Sigmoid colon (tissue), 7 donors: ENCODE measurements at regions of chr17 and their contacts with region 1.

Region 1: DNA sequence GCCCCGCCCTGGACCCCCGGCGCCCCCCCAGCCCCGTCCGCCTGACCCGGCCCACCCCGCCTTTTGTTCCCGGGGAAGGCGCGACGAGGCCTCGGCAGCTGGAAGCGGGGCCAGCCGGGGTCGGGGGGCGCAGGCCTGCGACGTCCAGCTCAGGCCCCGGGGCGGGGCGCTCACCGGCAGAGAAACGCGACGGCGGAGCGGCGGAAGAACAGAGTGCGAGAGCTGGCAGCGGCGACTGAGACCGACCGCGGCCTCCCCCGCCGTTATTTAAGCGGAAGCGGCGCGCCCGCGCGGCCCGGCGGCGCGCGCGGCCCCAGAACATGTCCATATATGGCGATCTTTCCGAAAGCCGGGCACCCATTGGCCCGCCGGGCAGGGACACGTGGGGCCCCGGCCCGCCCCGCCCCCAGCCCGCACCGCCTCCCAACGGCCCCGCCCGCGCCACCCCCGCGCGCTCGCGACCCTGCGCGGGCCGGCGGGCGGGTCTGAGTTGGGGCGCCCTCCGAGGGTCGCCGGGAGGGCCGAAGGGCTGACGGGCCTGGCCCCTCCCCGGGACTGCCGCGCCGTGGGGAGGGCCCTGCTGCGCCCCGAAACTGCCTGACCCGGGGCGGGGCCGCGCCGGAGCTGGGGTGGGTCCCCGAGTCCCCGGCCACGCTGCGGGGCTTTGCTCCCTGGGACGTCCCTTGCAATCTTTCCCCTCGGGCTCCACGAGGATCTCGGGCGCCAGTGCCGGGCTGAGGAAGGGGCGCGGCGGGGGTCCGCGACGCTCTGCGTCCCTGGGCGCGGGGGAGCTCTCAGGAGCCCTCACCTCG is at the start of gene ACTG1:
- DNase-seq: peak; percentile 97
- H3K4me3 ChIP-seq: peak within 1 kb of the TSS; percentile 88 to 99 (median 96)
- H3K27ac ChIP-seq: peak within 1 kb of the TSS; percentile 99 to 100 (median 100)
- H3K4me1 ChIP-seq: peaks cover 0 to 60% (median 36%) of the 10 kb centered on the region in 4 donors
- H3K27me3 ChIP-seq: no peaks in the 10 kb centered on the region
- CTCF ChIP-seq: no peak
- EP300 ChIP-seq: peak in 1 of 4 donors; percentile 25
- POLR2A ChIP-seq: peak; percentile 93
- total RNA-seq, gene ACTG1: 1,038 to 2,003 (median 1,212) TPM

Region 2: GRCh38 chr17:81346090-81346907 is 166.5 kb before region 1 on chr17:
- intact Hi-C with region 1: loop called (anchors 1 kb)
- DNase-seq: peak; percentile 100
- H3K4me3 ChIP-seq: peak overlapping the region; percentile 43 to 93 (median 72)
- H3K27ac ChIP-seq: peak overlapping the region; percentile 95 to 100 (median 98)
- H3K4me1 ChIP-seq: peaks cover 0 to 35% (median 17%) of the 10 kb centered on the region in 4 donors
- H3K27me3 ChIP-seq: no peaks in the 10 kb centered on the region
- CTCF ChIP-seq: no peak
- EP300 ChIP-seq: no peak
- POLR2A ChIP-seq: peak; percentile 93 to 97

Region 3: GRCh38 chr17:81394921-81395599 is 117.7 kb before region 1 on chr17 and contains the start of gene BAHCC1:
- intact Hi-C with region 1: loop called (anchors 2 kb)
- DNase-seq: peak; percentile 100
- H3K4me3 ChIP-seq: peak within 1 kb of the TSS; percentile 69 to 84 (median 74)
- H3K27ac ChIP-seq: peak within 1 kb of the TSS; percentile 93 to 99 (median 98)
- H3K4me1 ChIP-seq: peaks cover 0 to 57% (median 38%) of the 10 kb centered on the region in 4 donors
- H3K27me3 ChIP-seq: no peaks in the 10 kb centered on the region
- CTCF ChIP-seq: no peak
- EP300 ChIP-seq: peak in 2 of 4 donors; percentile 23 to 66
- POLR2A ChIP-seq: peak; percentile 96 to 97
- total RNA-seq, gene BAHCC1: 3.8 to 18.6 (median 7.2) TPM

Region 4: DNA sequence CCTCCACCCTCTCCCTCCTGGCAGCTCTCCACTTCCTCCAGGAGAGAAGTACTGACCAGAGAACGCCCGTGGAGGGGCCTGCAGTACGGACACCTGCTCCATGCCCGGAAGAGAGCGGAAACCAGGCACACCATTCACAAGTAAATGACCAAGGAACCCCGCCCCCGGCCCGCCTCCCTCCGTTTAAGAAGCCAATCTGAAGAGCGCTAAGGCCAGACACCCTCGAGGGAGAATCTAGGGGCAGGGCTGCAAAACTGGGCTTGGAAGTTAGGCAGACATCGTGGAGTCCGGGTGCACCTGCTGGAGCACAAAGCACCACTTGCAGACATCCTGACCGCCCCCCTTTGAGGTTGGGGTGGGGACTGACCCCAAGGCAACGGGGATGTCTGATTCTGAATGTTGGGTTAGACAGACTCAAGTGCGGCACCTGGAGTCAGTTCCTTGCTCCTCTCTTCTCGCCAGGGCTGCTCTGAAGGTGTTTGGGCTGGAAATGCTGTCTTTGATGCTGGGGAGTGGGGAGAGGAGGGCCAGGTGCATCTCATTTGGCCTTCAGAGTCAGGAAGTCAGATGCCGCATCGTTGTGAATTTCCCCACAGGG is 40.4 kb after region 1 on chr17:
- intact Hi-C with region 1: loop called (anchors 2 kb)
- DNase-seq: peak; percentile 81
- H3K4me3 ChIP-seq: peak overlapping the region; percentile 73 to 90 (median 81)
- H3K27ac ChIP-seq: peak overlapping the region; percentile 84 to 89 (median 85)
- H3K4me1 ChIP-seq: peaks cover 0 to 39% (median 26%) of the 10 kb centered on the region in 4 donors
- H3K27me3 ChIP-seq: no peaks in the 10 kb centered on the region
- CTCF ChIP-seq: no peak
- EP300 ChIP-seq: no peak
- POLR2A ChIP-seq: no peak

Region 5: DNA sequence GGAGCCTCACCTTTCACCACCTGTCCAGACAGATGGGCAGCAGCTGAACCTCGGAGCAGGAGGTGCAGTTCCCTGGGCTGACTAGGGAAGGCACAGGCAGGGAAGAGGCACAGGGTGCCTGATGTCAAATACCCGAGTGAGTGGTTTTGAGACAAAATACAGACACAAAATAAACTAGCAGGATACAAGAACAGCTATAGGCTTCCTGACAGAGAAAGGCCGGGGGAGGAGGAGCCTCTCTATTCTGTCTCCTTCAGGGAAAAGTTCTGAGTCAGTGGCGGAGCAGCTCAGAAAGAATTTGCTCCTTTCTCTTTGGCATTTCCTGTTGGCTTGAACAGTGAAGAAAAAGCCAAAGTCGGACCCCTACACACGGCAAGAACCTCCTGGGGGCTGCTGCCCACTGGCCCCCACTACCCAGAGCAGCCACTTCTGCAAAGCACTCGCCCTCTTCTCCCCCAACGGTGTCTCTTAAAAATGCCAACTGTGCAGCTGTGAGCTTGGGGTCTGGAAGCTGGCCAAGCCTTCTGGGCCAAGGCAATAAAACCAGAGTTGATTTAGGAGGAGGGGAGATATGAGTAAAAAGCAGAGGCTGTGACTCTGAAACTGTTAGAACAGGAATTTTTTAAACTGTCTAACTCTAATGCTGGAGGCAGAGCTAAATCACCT is 53.8 kb after region 1 on chr17:
- intact Hi-C with region 1: loop called (anchors 2 kb)
- DNase-seq: peak; percentile 90
- H3K4me3 ChIP-seq: peak overlapping the region in 3 of 4 donors; percentile 22 to 33 (median 23)
- H3K27ac ChIP-seq: peak overlapping the region; percentile 76 to 86 (median 84)
- H3K4me1 ChIP-seq: peaks cover 0 to 50% (median 40%) of the 10 kb centered on the region in 4 donors
- H3K27me3 ChIP-seq: no peaks in the 10 kb centered on the region
- CTCF ChIP-seq: no peak
- EP300 ChIP-seq: no peak
- POLR2A ChIP-seq: no peak